Motor neuron (in vitro differentiated cells): ENCODE measurements at regions of chr7 and their contacts with region 1.

Region 1: DNA sequence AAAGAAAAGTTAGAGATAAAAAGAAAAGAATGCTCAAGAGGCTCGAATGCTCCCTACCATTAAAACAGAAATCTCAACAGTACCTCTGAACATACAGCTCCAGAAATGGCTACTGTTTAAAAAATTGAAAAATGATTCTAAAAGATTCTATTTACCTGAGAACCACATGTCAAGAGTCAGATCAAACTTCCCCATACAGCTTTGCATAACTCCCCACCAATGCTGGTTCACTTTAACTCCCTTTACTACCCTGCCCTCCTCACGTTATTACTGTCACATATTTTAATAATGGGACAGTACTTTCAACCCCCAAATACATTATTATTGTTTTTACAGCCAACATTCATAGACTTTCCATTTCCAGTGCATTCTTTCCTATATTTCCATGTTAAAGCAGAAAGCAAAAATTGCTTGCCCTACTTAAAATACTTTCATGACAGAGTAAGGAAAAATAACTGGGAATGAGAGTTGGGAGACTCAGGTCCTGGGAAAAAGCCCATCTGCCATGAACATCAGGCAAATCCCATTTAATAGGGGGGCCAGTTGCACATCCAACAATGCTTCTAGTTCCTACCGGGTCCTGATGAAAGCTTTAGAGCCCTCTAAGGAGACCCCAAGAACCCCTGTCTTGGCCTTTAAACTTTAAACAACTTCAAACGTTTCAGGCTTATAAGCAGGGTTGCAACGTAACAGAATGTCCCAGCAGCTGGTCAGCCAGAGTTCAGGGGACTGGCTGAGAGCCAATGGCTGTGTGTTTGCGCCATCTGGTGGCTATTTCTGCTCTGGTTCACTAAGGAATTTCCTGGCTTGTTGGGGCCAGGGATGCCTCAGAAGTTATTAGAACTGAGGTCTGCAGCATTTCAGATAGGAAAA is 247.4 kb downstream of the ELMO1 start:
- ATAC-seq: peak; percentile 71 to 90 (median 82)
- H3K4me3 ChIP-seq: no peak overlapping the region
- H3K27ac ChIP-seq: no peak overlapping the region
- H3K4me1 ChIP-seq: peaks cover 0 to 3% of the 10 kb centered on the region in 2 donors

Region 2: GRCh38 chr7:36473454-36474282 is 727.6 kb before region 1 on chr7:
- in situ Hi-C with region 1: loop called in 8 of 9 experiments (anchors 10 to 25 kb)
- ATAC-seq: peak in 4 of 8 experiments; percentile 56 to 71 (median 62)
- H3K4me3 ChIP-seq: no peak overlapping the region
- H3K27ac ChIP-seq: no peak overlapping the region
- H3K4me1 ChIP-seq: peaks cover 0 to 8% of the 10 kb centered on the region in 2 donors

Region 3: DNA sequence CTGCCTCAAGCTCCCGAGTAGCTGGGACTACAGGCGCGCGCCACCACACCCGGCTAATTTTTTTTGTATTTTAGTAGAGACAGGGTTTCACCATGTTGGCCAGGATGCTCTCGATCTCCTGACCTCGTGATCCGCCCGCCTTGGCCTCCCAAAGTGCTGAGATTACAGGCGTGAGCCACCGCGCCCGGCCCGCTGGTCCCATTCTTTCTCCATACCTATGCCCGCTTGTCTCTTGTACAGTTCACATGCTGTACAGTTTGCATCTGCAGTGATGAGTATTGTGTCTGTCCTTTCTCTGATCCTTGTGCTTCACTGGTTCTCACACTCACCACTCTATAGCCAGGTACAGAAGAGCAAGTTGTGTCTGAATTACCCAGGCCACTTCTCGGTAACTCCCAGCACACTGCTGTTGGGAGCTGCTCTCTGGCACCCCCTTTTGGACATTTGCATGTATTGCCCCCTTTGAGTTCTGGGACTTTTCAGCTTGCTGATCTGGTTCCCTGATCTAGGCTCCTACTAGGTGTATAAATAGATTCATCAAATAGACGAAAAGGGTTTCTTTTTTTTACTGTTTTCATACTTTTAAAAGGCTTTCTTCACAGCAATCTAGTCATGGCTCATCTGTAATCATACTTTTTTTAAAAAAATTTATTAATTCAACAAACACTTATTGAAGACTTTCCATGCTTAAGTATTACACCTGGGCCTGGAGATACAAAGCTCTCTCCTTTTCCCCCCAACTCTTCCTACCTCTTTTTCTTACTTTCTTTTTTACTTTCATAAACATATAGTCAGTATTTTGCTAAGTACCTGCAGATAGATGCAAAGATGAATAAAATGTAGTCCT is 530.4 kb before region 1 on chr7:
- in situ Hi-C with region 1: loop called in 1 of 9 experiments (anchors 25 kb)
- ATAC-seq: peak in 7 of 8 experiments; percentile 32 to 80 (median 64)
- H3K4me3 ChIP-seq: no peak overlapping the region
- H3K27ac ChIP-seq: no peak overlapping the region
- H3K4me1 ChIP-seq: peaks cover 0 to 9% of the 10 kb centered on the region in 2 donors

Region 4: DNA sequence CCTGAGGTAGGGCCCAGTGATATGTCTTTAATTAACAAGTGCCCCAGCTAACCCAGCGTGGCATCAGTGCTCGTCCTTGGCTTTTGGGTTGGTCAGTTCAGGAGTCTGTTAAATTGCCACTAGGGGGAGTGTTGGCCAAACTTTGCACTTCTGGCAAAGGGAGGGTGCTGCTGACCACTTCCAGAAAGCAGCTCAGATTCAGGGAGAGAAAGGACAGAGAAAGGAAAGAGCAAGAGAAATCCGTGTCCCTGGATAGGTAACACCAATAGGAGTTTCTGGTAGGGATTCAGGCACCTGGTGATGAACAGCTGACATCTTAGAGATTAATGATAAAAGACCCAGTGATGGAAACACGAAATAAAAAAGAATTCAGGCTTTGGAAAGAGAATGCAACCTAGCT is 233.9 kb before region 1 on chr7:
- in situ Hi-C with region 1: loop called in 1 of 9 experiments (anchors 25 kb)
- ATAC-seq: peak; percentile 78 to 98 (median 94)
- H3K4me3 ChIP-seq: no peak overlapping the region
- H3K27ac ChIP-seq: no peak overlapping the region
- H3K4me1 ChIP-seq: peaks cover 41 to 50% of the 10 kb centered on the region in 2 donors

Region 5: GRCh38 chr7:37833107-37833817 is 632.0 kb after region 1 on chr7:
- in situ Hi-C with region 1: loop called in 3 of 9 experiments (anchors 25 kb)
- ATAC-seq: peak in 2 of 8 experiments; percentile 28 to 36
- H3K4me3 ChIP-seq: no peak overlapping the region
- H3K27ac ChIP-seq: no peak overlapping the region
- H3K4me1 ChIP-seq: no peaks in the 10 kb centered on the region